Thyroid gland (tissue), 4 donors: ENCODE measurements at regions of chr14 and their contacts with region 1.

Region 1: GRCh38 chr14:65958664-65959562 is 527.3 kb upstream of the CCDC196 start:
- DNase-seq: peak in 1 of 2 donors; percentile 7
- H3K4me3 ChIP-seq: no peak overlapping the region
- H3K27ac ChIP-seq: no peak overlapping the region
- H3K4me1 ChIP-seq: no peaks in the 10 kb centered on the region
- H3K27me3 ChIP-seq: no peaks in the 10 kb centered on the region
- CTCF ChIP-seq: peak in 4 of 6 experiments; percentile 39 to 51 (median 50)
- POLR2A ChIP-seq: no peak

Region 2: DNA sequence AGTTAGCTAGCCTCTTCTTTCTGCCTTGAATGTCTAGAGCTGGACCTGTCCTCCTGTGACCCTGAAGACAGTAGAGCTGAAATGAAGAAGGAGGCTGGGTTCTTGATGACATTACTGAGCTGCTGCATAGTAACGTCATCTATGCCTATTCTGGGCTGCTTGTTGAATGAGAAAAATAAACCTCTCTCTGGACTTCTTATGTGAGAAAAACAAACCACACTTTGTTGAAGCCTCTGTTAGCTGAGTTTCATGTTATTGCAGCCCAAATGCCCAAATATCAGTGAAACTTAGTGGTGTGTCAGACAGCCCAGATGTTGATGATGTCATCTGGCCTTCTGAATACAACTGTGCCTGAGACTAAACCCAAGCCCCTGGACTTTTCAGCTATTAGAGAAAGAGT is 789.6 kb before region 1 on chr14:
- intact Hi-C with region 1: loop called (anchors 5 kb)
- DNase-seq: no peak
- H3K4me3 ChIP-seq: no peak overlapping the region
- H3K27ac ChIP-seq: no peak overlapping the region
- H3K4me1 ChIP-seq: peaks cover 0 to 5% of the 10 kb centered on the region in 2 donors
- H3K27me3 ChIP-seq: no peaks in the 10 kb centered on the region
- CTCF ChIP-seq: no peak
- POLR2A ChIP-seq: no peak

Region 3: GRCh38 chr14:65412032-65412846 is 546.7 kb before region 1 on chr14 and contains the start of gene FUT8:
- intact Hi-C with region 1: loop called (anchors 10 kb)
- DNase-seq: peak; percentile 98
- H3K4me3 ChIP-seq: peak within 1 kb of the TSS; percentile 89 to 95 (median 89)
- H3K27ac ChIP-seq: peak within 1 kb of the TSS; percentile 73 to 97 (median 92)
- H3K4me1 ChIP-seq: peaks cover 4 to 13% of the 10 kb centered on the region in 2 donors
- H3K27me3 ChIP-seq: no peaks in the 10 kb centered on the region
- CTCF ChIP-seq: peak; percentile 18 to 87 (median 62)
- POLR2A ChIP-seq: peak in 1 of 2 donors; percentile 92
- total RNA-seq, gene FUT8: 29.2 to 55.5 (median 41.1) TPM

Region 4: DNA sequence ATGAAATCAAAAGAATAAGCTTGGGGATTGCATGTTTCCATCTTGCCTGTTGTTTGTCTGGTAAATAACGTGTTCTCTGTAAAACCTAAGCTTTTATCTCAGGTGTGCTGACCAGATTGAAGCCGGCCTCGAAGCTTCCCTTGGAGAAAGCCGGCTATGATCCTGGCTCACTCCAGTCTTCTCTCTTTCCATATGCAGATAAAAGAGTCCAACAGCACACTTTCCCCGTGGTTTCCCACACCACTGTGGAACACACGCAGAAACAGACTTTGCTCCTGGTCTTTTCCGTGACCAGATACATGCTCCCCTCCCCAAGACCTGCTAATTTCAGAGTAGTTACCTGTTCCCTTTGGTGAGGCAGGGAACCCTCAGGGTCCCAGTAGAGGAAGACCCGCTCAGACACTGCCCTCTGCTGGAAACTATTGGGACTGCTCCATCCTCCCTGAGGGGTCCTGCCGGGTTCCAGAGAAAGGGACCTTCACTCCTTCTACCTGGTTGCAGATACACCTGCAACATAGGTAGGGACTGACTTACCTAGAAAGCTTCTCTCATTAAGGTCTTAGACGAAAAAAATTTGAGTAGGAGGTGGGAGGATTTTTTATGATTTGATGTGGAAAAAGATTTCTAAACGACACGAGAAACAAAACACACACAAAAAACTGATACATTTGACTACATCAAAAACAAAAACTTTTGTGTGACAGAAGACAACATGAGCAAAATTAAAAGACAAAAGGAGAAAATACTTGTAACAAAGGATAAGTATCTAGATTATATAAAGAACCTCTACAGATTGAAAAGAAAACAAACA is 111.8 kb after region 1 on chr14:
- intact Hi-C with region 1: loop called (anchors 5 kb)
- DNase-seq: peak; percentile 44 to 45
- H3K4me3 ChIP-seq: no peak overlapping the region
- H3K27ac ChIP-seq: no peak overlapping the region
- H3K4me1 ChIP-seq: no peaks in the 10 kb centered on the region
- H3K27me3 ChIP-seq: no peaks in the 10 kb centered on the region
- CTCF ChIP-seq: peak; percentile 55 to 79 (median 58)
- POLR2A ChIP-seq: no peak